ENCODE measurements at regions of chr5 and their contacts with region 1.

Region 1: DNA sequence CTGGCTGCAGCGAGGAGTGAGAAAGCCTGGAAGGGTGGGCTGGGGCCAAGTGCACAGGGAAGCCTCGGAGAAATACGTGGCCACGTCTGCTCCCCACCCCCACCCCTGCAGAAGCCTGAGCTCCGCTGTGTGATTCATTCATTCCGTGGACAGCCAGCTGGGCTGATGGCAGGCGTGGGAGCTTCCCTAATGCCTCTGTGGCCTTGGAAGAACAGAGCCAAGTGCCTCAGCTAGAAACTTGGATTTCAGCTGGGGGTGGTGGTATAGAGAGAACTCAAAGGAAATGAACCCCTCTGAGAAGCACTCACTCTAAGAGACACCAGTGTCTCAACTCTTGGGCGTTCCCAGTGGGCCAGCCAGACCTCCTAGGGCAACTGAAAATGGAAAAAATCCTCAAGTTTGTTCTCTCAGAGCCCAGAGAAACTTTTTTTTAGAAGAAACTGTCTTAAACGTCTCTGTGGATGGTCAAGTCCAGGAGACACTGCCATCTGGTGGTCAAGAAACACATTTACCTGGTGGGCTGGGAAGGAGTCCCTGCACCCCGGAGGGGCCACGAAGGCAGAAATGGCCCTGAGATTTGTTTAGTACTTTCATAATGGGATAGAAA is 18.0 kb downstream of the ATOX1 start:
- DNase-seq: peak; percentile 96
- ATAC-seq: peak; percentile 61
- H3K4me3 ChIP-seq: no peak overlapping the region
- H3K27ac ChIP-seq: peak overlapping the region; percentile 100
- H3K4me1 ChIP-seq: peaks cover 23% of the 10 kb centered on the region
- H3K27me3 ChIP-seq: no peaks in the 10 kb centered on the region
- CTCF ChIP-seq: peak; percentile 86
- POLR2A ChIP-seq: peak; percentile 68
- RAD21 ChIP-seq: peak; percentile 81

Region 2: DNA sequence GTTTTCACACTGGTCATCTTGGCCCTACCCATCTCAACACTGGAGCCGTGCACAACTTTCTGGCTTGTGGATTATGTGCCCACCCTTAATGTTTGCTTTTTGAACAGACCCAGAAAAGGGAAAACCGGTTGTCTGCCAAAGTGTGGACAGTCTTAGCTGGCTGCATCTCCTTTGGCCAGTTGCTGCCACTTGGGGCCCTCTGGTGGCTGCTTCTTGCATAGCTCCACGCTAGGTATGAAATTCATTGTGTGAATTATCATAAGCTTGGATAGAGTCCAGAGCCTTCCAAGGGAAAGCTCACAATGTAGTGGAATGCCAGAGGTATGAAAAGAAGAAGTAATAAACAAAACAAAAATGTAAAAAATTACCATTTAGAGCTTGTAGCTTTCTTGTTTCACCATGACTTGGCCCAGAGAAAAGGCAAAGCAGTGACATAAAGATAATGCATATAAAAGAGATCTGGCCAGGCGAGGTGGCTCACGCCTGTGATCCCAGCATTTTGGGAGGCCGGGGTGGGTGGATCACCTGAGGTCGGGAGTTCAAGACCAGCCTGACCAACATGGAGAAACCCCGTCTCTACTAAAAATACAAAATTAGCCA is 424.3 kb before region 1 on chr5:
- CTCF ChIA-PET with region 1: no interaction called
- POLR2A ChIA-PET with region 1: no interaction called
- dilution Hi-C with region 1: no loop called
- in situ Hi-C with region 1: no loop called
- intact Hi-C with region 1: loop called (anchors 5 kb)
- DNase-seq: peak; percentile 63
- ATAC-seq: peak; percentile 95
- H3K4me3 ChIP-seq: no peak overlapping the region
- H3K27ac ChIP-seq: no peak overlapping the region
- H3K4me1 ChIP-seq: no peaks in the 10 kb centered on the region
- H3K27me3 ChIP-seq: no peaks in the 10 kb centered on the region
- CTCF ChIP-seq: peak; percentile 81
- POLR2A ChIP-seq: no peak
- RAD21 ChIP-seq: peak; percentile 63

Region 3: DNA sequence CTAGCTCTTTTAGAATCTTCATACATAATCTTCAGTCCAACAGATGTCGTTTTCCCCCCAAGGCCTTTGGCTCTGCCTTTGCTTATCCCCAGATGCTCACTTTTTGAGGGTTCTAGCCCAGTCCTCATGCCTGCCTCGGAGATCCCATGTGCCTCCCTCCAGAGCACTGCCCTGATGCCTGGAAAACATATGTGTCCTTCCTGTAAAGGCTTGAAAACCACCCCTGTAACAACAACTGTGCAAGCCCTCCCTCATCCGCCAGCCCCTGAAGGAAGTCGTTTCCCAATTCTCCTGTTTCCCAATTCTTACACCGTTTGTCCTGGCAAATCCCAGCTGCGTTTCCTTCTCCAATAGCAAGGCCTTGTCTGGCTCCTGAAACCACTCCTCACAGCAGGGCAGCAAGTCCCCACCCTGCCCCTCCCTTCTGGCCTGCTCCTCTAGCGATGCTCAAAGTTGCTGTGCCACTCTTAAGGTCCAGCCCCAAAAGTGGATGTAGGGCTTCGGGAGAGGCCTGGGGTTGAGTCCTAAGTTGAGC is 240.9 kb before region 1 on chr5:
- CTCF ChIA-PET with region 1: no interaction called
- POLR2A ChIA-PET with region 1: no interaction called
- dilution Hi-C with region 1: no loop called
- in situ Hi-C with region 1: no loop called
- intact Hi-C with region 1: loop called (anchors 2 kb)
- DNase-seq: no peak
- ATAC-seq: no peak
- H3K4me3 ChIP-seq: no peak overlapping the region
- H3K27ac ChIP-seq: no peak overlapping the region
- H3K4me1 ChIP-seq: no peaks in the 10 kb centered on the region
- H3K27me3 ChIP-seq: no peaks in the 10 kb centered on the region
- CTCF ChIP-seq: no peak
- POLR2A ChIP-seq: no peak
- RAD21 ChIP-seq: no peak

Region 4: GRCh38 chr5:151659001-151659754 is 81.3 kb before region 1 on chr5:
- CTCF ChIA-PET with region 1: interaction called, 55 read pairs
- POLR2A ChIA-PET with region 1: interaction called, 11 read pairs
- dilution Hi-C with region 1: no loop called
- in situ Hi-C with region 1: loop called (anchors 5 kb)
- intact Hi-C with region 1: loop called (anchors 1 kb)
- DNase-seq: peak; percentile 80
- ATAC-seq: peak; percentile 74
- H3K4me3 ChIP-seq: no peak overlapping the region
- H3K27ac ChIP-seq: peak overlapping the region; percentile 82
- H3K4me1 ChIP-seq: peaks cover 17% of the 10 kb centered on the region
- H3K27me3 ChIP-seq: no peaks in the 10 kb centered on the region
- CTCF ChIP-seq: peak; percentile 93
- POLR2A ChIP-seq: peak; percentile 51
- RAD21 ChIP-seq: peak; percentile 95

Region 5: DNA sequence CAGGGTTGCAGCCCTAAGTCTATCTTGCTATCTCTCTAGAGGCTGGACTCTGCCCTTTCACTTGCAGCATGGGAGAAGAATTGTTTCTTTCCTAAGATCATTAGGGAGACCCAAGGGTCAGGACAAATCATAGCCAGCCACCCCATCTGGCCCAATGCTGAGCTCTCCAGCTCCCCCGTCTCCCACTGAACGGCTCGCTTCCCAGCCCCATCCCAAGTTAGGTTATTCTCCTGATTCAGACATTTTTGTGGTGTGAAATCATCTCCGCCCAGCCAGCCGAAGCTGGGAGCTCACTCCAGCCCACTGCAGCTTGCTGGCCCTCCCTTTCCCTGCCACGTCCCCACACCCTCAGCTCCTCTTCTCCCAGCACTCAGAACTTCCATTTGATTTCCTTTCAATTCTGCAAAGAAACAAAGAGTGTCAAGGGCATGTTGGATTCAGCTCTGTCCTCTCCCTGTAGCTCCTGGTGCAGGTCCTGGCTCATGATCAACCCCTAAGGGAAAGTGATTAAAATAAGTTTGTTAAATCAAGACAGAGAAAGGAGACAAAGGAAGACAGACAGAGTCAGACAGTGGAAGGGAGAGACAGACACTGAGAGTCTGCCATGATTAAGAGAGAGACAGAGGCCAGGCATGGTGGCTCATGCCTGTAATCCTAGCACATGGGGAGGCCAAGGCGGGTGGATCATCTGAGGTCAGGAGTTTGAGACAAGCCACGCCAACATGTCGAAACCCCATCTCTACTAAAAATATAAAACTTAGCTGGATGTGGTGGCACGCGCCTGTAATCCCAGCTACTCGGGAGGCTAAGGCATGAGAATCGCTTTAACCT is 41.2 kb before region 1 on chr5:
- CTCF ChIA-PET with region 1: interaction called, 9 read pairs
- POLR2A ChIA-PET with region 1: interaction called, 13 read pairs
- dilution Hi-C with region 1: no loop called
- in situ Hi-C with region 1: loop called (anchors 5 kb)
- intact Hi-C with region 1: loop called (anchors 1 kb)
- DNase-seq: peak; percentile 99
- ATAC-seq: peak; percentile 84
- H3K4me3 ChIP-seq: no peak overlapping the region
- H3K27ac ChIP-seq: peak overlapping the region; percentile 92
- H3K4me1 ChIP-seq: peaks cover 35% of the 10 kb centered on the region
- H3K27me3 ChIP-seq: no peaks in the 10 kb centered on the region
- CTCF ChIP-seq: 0 out of 2 replicates have a peak, but pooled peaks have one; percentile 5
- POLR2A ChIP-seq: peak; percentile 78
- RAD21 ChIP-seq: peak; percentile 6; the same call in 1 of the 2 replicates